ENCODE measurements at regions of chr15 and their contacts with region 1.

Region 1: GRCh38 chr15:30043211-30043655 is 39.5 kb upstream of the GOLGA8J start:
- DNase-seq: no peak
- H3K4me3 ChIP-seq: peak overlapping the region in 24 of 59 donors; percentile 1 to 37 (median 22)
- H3K27ac ChIP-seq: peak overlapping the region in 56 of 59 donors; percentile 56 to 96 (median 88)
- H3K27me3 ChIP-seq: no peaks in the 10 kb centered on the region
- CTCF ChIP-seq: peak in 55 of 56 donors; percentile 49 to 85 (median 66)

Region 2: DNA sequence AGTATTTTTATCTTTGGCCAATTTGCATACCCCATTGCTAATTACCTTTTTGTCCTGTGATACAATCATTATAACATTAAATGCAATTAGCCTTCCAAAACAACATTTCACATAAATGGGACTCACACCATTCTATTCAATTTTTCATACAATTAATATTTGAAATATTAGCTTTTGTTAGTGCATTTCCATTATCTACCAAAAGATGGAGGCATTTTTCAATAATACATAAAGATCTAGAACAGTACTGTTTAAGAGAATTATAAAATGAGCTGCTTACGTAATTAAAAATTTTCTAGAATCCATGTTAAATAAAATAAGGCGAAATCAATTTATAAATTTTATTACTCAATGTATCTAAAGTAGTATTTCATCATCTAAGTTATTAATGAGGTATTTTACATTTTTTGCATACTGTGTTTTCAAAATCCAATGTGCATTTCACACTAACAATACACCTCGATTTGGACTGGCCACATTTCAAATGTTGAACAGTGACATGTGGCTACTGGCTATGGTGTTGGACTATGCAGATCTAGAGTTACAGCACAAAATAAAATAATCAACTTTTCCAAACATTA is 295.3 kb before region 1 on chr15:
- intact Hi-C with region 1: loop called in 1 of 2 experiments (anchors 10 kb)
- DNase-seq: no peak
- H3K4me3 ChIP-seq: no peak overlapping the region
- H3K27ac ChIP-seq: peak overlapping the region in 40 of 59 donors; percentile 3 to 89 (median 54)
- H3K27me3 ChIP-seq: no peaks in the 10 kb centered on the region
- CTCF ChIP-seq: peak in 55 of 56 donors; percentile 33 to 77 (median 55)

Region 3: GRCh38 chr15:29935276-29936020 is 107.8 kb before region 1 on chr15:
- intact Hi-C with region 1: loop called (anchors 5 kb)
- DNase-seq: no peak
- H3K4me3 ChIP-seq: no peak overlapping the region
- H3K27ac ChIP-seq: peak overlapping the region in 44 of 59 donors; percentile 2 to 92 (median 56)
- H3K27me3 ChIP-seq: no peaks in the 10 kb centered on the region
- CTCF ChIP-seq: peak in 41 of 56 donors; percentile 8 to 64 (median 35)

Region 4: GRCh38 chr15:30001602-30002001 is 41.6 kb before region 1 on chr15:
- intact Hi-C with region 1: loop called (anchors 5 kb)
- DNase-seq: peak; percentile 31 to 97 (median 92)
- H3K4me3 ChIP-seq: peak overlapping the region in 6 of 59 donors; percentile 3 to 37 (median 10)
- H3K27ac ChIP-seq: peak overlapping the region; percentile 82 to 100 (median 97)
- H3K27me3 ChIP-seq: no peaks in the 10 kb centered on the region
- CTCF ChIP-seq: peak in 12 of 56 donors; percentile 8 to 51 (median 19)

Region 5: DNA sequence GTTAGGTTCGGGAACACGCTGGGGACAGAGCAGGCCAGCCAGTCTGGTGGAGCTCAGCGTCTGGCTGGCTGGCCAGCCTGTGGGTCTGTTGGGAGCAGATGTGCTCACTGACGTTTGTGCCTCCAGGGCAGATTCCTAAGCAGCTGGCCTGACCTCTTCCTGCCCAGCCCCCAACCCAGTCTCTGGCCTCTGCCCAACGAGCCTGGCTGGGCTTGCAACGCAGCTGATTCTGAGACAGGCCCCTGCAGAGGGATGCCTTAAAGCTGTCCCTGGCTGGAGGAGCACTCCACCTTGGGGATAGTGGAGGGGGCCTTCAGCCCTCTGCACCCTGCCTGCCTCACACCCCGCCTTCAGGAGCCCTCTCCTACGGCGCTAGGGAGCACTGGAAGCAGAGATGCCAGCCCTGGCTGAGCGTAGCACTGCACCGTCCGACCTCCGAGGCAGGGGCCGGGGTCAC is 1329.4 kb after region 1 on chr15:
- intact Hi-C with region 1: no loop called
- DNase-seq: peak in 6 of 10 donors; percentile 63 to 78 (median 74)
- H3K4me3 ChIP-seq: peak overlapping the region in 1 of 59 donors; percentile 1
- H3K27ac ChIP-seq: peak overlapping the region in 51 of 59 donors; percentile 0 to 100 (median 59)
- H3K27me3 ChIP-seq: no peaks in the 10 kb centered on the region
- CTCF ChIP-seq: peak in 5 of 56 donors; percentile 7 to 16 (median 12)

Measured in dorsolateral prefrontal cortex (tissue), 120 donors.